Colonic mucosa (tissue), 4 donors: ENCODE measurements at regions of chr14 and their contacts with region 1.

Region 1: GRCh38 chr14:78455896-78456435 is 285.8 kb downstream of the NRXN3 start:
- DNase-seq: no peak
- H3K4me3 ChIP-seq: no peak overlapping the region
- H3K27ac ChIP-seq: no peak overlapping the region
- H3K4me1 ChIP-seq: no peaks in the 10 kb centered on the region
- H3K27me3 ChIP-seq: no peaks in the 10 kb centered on the region
- CTCF ChIP-seq: no peak

Region 2: DNA sequence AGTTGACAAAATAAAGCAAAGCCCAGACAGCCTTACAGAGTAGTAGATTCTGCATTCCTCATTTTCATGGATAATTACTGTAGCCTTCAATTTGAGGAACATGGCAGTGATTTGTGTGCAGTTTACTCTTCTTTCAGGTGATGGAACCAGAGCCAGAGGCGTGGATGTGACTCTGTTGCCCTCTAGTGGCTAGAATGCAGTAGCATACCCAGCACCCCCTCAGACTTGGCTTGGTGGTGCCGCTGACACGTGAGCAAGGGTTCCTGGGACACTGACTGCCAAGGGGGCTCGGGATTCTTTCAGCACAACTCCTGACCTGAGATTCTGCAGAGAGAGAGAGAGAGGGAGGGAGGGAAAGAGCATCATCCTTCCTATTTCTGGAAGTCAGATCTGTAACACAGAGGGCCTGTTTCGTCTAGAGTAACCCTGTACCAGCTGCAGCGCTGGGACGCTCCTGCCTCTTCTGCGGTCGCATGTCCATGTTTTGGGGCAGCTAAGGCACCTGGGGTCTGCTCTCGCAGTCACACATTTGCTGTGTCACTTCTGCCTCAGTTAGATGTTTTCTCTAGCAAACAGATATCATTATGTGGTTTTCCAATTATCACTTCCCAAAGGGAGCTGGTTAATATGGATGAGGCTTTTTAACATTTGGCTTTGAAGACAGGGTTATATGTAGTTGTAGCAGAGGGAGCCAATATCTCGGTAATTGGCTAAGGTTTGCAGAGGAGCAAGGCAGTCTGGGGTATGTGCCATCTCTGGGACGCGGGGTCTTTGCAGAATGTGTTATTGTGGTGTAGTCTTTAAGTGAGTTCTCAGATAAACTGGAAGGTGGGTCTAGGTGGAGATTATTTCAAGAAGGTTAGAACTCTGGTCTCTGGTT is 142.3 kb after region 1 on chr14:
- intact Hi-C with region 1: loop called (anchors 10 kb)
- DNase-seq: peak; percentile 30
- H3K4me3 ChIP-seq: no peak overlapping the region
- H3K27ac ChIP-seq: no peak overlapping the region
- H3K4me1 ChIP-seq: no peaks in the 10 kb centered on the region
- H3K27me3 ChIP-seq: no peaks in the 10 kb centered on the region
- CTCF ChIP-seq: peak; percentile 88